ENCODE measurements at regions of chr1 and their contacts with region 1.

Region 1: DNA sequence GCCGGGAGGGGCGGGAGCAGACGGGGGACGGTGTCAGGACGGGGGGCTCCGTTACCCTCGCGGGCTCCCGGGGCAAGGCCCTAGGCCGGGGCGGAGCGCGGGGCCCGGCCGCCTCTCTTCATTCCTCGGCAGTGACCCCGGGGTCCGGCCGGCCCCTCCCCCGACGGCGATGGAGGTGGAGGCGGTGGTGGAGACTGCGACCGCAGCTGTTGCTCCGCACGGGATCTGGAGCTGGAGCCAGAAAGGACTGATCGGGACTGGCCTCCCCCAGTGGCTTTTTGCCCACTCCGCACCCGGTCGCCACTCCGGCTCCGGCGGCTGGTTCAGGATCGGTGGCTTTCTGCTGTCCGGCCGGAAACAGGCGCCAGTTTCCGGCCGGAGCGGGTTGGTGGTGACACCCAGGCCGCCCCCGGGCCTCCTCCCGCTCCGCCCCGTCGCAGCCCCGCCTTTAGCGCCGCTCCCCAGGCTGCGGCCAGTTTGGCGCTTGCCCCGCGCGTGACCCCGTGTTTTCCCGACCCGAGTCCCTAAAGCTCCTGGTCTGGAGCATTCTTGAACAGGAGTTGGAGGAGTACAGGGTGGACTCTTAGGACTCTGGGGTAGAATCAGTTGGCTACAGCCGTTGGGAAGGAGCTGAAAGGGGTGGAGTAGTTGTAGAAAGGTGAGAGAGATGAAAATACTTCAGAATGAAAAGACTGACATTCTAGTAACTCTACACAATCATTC is at the start of gene OTUD7B:
- DNase-seq: peak; percentile 92

Region 2: GRCh38 chr1:149997585-149998262 is 12.8 kb before region 1 on chr1:
- CTCF ChIA-PET with region 1: no interaction called
- POLR2A ChIA-PET with region 1: interaction called, 16 read pairs
- DNase-seq: no peak

Region 3: GRCh38 chr1:150021191-150021694 is 10.7 kb after region 1 on chr1:
- CTCF ChIA-PET with region 1: interaction called, 5 read pairs
- POLR2A ChIA-PET with region 1: interaction called, 31 read pairs
- DNase-seq: no peak

Measured in HEK293T (cell line).